CD4-positive, alpha-beta memory T cell (primary cell): ENCODE measurements at regions of chr17 and their contacts with region 1.

Region 1: DNA sequence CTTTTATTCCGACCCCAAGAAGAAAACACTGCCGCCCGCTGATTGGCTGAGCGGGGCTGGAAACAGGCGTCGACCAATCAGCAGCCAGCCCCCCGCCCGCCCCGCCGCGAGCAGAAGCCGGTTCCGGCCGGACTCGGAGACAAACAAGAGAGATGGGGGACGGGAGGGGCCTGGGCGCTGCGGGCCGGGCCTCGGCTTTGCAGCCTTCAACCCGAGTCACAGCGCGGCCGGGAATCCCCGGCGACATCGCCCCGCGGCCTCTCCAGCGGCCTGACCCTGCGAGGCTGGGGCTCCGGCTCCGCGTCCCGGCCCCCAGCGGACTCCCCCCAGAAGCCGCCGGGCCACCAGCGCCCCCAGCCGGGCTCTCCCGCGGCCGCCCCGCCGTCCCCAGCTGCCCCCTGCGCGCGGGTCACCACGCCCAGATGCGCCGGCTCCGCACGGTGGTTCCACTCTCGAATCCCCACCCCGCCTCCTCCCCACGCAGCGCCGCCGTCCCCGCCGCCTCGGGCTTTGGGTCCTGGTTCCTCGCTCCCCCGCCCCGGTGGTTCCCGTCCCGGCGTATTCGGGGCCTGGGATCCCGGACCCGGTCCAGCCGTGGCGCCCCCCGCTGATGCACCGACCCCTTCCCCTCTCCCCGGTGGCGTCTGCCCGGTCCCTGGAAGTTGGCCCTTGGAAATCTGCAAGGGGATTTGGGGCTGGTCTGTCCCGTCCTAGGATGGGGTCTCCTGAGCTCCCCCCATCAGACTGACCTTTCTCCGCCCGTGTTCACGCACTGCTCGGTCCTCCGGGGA is 417 bp upstream of the SLC43A2 start:
- DNase-seq: peak; percentile 83 to 90 (median 85)
- H3K4me3 ChIP-seq: peak overlapping the region; percentile 57 to 73
- H3K4me3 Mint-ChIP-seq: peak overlapping the region; percentile 87 to 99 (median 92)
- H3K27ac ChIP-seq: peak overlapping the region; percentile 44
- H3K27ac Mint-ChIP-seq: peak overlapping the region; percentile 75 to 96 (median 86)
- H3K4me1 ChIP-seq: peaks cover 22% of the 10 kb centered on the region
- H3K4me1 Mint-ChIP-seq: peaks cover 3 to 27% (median 12%) of the 10 kb centered on the region in 4 donors
- H3K27me3 ChIP-seq: peaks cover 8% of the 10 kb centered on the region
- H3K27me3 Mint-ChIP-seq: peaks cover 1% of the 10 kb centered on the region in 2 donors

Region 2: DNA sequence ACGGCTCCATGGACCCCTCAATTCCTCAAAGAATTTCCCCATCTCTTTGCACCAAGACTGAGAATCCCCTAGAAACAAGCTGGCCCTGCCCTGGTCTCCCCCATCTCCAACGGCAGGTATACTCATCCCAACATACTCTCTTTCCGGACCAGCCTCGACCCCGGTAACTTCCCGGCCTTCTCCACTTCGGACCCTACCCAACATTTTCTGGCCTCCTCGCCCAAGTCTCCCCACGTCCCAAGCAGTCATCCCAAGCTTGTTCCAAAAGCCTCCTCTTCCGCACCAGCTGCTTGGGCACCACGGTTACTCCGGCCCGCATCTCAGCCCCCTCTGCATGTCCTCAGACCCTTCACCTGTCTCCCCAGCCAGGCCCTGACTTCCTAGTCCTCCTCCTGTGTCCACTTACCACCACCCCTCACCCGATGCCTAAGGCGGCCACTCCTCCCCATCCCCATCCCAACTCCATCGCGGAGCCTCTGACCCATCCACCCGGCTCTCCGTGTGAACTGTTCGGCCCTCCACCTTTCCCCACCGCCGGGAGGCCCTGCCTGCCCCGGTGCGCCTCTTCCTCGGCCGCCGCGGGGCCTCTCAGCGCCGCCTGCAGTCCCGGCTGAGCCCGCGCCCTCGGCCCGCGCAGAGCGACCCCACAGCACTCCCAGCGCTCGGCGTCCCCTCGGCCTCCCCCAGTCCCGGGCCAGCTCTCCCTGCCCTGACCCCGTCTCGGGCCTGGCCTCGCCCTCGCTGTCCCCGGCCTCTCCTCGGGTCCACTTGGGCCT is 67.5 kb before region 1 on chr17:
- CTCF ChIA-PET with region 1: interaction called, 3 read pairs
- POLR2A ChIA-PET with region 1: interaction called, 7 read pairs
- intact Hi-C with region 1: loop called (anchors 1 kb)
- DNase-seq: peak in 4 of 5 donors; percentile 32 to 44 (median 36)
- H3K4me3 ChIP-seq: peak overlapping the region; percentile 2 to 17
- H3K4me3 Mint-ChIP-seq: peak overlapping the region; percentile 78 to 89 (median 85)
- H3K27ac ChIP-seq: peak overlapping the region; percentile 59
- H3K27ac Mint-ChIP-seq: peak overlapping the region; percentile 71 to 93 (median 89)
- H3K4me1 ChIP-seq: peaks cover 39% of the 10 kb centered on the region
- H3K4me1 Mint-ChIP-seq: peaks cover 29 to 53% (median 41%) of the 10 kb centered on the region in 4 donors
- H3K27me3 ChIP-seq: no peaks in the 10 kb centered on the region
- H3K27me3 Mint-ChIP-seq: no peaks in the 10 kb centered on the region

Region 3: DNA sequence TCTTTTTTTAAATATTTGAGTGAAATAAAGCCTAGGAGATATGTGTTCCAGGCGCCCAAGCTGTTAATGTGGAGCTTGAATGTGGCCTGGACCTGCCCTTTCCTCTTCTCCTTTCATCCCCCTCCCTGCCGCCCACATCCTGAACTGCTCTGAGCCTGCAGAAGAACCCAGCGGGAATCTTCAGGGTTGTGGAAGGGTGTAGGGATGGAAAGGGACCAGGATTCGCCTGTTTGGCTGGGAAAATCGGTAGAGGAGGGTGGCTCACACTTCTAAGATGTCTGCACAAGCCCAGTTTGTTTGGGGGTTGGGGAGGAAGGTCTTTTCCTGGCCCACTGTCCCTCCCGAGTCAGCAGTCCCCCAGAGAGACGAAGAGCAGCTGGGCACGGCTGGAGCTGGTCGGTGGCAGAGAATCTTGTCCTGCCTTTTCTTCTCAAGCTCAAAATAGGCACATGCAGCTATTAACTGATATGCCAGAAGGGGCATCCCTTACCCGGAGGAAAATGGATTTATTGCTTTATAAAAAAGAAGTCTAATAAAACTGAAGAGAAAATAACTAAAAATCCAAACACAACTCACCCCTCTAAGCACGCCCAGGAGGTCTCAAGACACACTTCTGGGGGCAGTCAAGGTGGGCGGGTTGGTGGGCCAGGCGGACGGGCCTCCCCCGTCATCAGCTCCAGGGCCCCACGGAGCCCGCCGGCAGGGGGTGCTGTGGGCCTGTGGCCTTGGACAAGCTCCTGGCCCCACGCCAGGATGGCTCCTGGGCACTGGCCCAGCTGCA is 54.9 kb before region 1 on chr17:
- CTCF ChIA-PET with region 1: interaction called, 12 read pairs
- POLR2A ChIA-PET with region 1: interaction called, 3 read pairs
- intact Hi-C with region 1: no loop called
- DNase-seq: peak in 4 of 5 donors; percentile 26 to 44 (median 29)
- H3K4me3 ChIP-seq: no peak overlapping the region
- H3K4me3 Mint-ChIP-seq: no peak overlapping the region
- H3K27ac ChIP-seq: no peak overlapping the region
- H3K27ac Mint-ChIP-seq: no peak overlapping the region
- H3K4me1 ChIP-seq: no peaks in the 10 kb centered on the region
- H3K4me1 Mint-ChIP-seq: peaks cover 0 to 2% (median under 1%) of the 10 kb centered on the region in 4 donors
- H3K27me3 ChIP-seq: no peaks in the 10 kb centered on the region
- H3K27me3 Mint-ChIP-seq: no peaks in the 10 kb centered on the region

Region 4: DNA sequence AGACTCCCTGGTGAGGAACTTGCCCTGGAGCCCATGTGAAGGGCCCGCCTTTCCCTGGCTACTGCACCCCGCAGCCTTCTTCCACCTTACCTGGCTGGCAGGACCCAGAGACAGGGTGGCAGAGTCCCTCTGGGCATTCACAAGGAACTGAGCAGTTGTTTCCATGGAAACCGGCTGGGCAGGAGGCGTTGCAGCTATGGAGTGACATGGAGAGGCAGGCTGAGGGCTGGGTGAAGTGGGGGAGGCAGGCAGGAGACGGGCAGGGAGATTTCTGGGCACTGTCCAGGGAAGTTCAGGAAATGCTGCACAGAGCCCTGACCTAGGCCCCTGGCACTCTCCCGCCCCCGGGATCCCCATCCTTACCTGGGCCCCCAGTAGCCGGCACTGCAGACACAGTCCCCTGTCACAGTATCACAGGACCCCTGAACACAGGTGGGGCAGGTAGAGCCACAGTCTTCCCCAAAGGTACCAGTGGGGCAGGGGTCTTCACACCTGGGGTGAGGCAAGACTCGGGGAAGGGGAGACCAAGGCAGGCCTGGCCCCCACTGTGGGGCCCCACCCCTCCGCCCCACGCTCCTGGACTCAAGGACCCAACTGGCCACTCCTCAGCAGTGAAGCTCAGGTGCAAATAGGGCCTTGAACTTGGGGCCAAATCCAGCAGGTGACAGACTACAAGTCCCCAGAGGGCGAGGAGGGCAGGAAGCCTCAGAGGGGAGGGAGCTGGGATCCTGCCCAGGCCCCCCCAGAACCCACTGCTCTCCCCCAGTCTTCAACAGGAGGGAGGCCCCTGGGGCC is 10.7 kb after region 1 on chr17:
- CTCF ChIA-PET with region 1: interaction called, 6 read pairs
- POLR2A ChIA-PET with region 1: interaction called, 10 read pairs
- intact Hi-C with region 1: no loop called
- DNase-seq: peak in 1 of 5 donors; percentile 41
- H3K4me3 ChIP-seq: no peak overlapping the region
- H3K4me3 Mint-ChIP-seq: no peak overlapping the region
- H3K27ac ChIP-seq: no peak overlapping the region
- H3K27ac Mint-ChIP-seq: peak overlapping the region in 2 of 7 donors; percentile 41 to 64
- H3K4me1 ChIP-seq: peaks cover 10% of the 10 kb centered on the region
- H3K4me1 Mint-ChIP-seq: peaks cover 6 to 13% (median 8%) of the 10 kb centered on the region in 4 donors
- H3K27me3 ChIP-seq: no peaks in the 10 kb centered on the region
- H3K27me3 Mint-ChIP-seq: no peaks in the 10 kb centered on the region

Region 5: GRCh38 chr17:1661045-1661444 is 32.0 kb after region 1 on chr17:
- CTCF ChIA-PET with region 1: no interaction called
- POLR2A ChIA-PET with region 1: no interaction called
- intact Hi-C with region 1: no loop called
- DNase-seq: no peak
- H3K4me3 ChIP-seq: no peak overlapping the region
- H3K4me3 Mint-ChIP-seq: no peak overlapping the region
- H3K27ac ChIP-seq: no peak overlapping the region
- H3K27ac Mint-ChIP-seq: peak overlapping the region in 2 of 7 donors; percentile 25 to 65
- H3K4me1 ChIP-seq: no peaks in the 10 kb centered on the region
- H3K4me1 Mint-ChIP-seq: peaks cover 0 to 4% (median 2%) of the 10 kb centered on the region in 4 donors
- H3K27me3 ChIP-seq: no peaks in the 10 kb centered on the region
- H3K27me3 Mint-ChIP-seq: no peaks in the 10 kb centered on the region

Region 6: DNA sequence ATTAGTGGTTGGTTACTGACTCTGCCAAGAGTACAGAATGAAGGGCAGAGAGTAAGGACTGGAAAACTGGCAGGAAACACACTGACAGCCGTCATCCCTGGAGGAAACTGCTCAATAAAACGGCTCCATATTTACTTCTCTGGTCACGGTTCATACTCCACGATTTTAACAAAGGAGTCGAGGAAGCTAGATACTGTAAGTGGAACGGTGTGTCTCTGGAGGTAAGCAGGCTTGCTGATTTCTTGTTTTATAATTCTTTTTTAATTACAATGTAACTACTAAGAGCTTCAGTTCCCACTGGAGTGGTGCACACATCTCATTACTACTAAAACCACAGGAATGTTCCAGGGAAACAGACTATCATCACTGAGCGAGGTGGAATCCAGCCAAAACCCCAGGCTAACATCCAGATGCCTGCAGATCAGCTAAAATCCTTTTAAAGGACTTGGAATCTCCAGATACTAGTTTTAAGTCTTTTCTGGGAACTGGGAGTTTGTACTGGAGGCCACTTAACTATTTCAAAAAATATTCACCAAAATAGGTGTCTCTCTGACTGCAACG is 150.6 kb after region 1 on chr17:
- CTCF ChIA-PET with region 1: no interaction called
- POLR2A ChIA-PET with region 1: no interaction called
- intact Hi-C with region 1: no loop called
- DNase-seq: no peak
- H3K4me3 ChIP-seq: no peak overlapping the region
- H3K4me3 Mint-ChIP-seq: no peak overlapping the region
- H3K27ac ChIP-seq: no peak overlapping the region
- H3K27ac Mint-ChIP-seq: peak overlapping the region in 3 of 7 donors; percentile 16 to 47 (median 29)
- H3K4me1 ChIP-seq: no peaks in the 10 kb centered on the region
- H3K4me1 Mint-ChIP-seq: peaks cover 0 to 10% (median 1%) of the 10 kb centered on the region in 4 donors
- H3K27me3 ChIP-seq: no peaks in the 10 kb centered on the region
- H3K27me3 Mint-ChIP-seq: no peaks in the 10 kb centered on the region